ENCODE measurements at regions of chr22 and their contacts with region 1.

Region 1: GRCh38 chr22:24768537-24769374 is 5.8 kb downstream of the PIWIL3 start:
- DNase-seq: peak; percentile 32
- H3K4me3 ChIP-seq: no peak overlapping the region
- H3K27ac ChIP-seq: no peak overlapping the region
- H3K27me3 ChIP-seq: peaks cover 13% of the 10 kb centered on the region
- CTCF ChIP-seq: peak; percentile 68

Region 2: DNA sequence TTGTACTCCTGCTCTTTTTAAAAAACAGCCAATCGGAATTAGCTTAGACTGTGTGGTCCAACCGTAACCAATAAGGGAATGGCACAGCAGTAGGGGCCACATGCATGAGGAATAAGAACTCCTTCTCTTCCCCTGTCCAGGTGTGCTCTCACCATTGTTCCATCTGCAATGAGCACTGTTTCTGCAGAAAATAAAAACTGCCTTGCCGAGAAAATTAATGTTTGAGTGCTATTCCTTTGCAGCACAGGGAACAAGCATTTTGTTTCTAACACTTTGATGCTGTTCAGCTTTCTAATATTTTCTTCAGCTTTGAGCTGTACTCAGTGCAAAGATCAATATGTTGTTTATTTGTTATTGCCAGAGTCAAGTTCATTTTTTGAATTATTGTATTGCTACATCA is 52.2 kb before region 1 on chr22:
- CTCF ChIA-PET with region 1: no interaction called
- POLR2A ChIA-PET with region 1: no interaction called
- DNase-seq: no peak
- H3K4me3 ChIP-seq: no peak overlapping the region
- H3K27ac ChIP-seq: no peak overlapping the region
- H3K27me3 ChIP-seq: peaks cover 2% of the 10 kb centered on the region
- CTCF ChIP-seq: no peak

Region 3: DNA sequence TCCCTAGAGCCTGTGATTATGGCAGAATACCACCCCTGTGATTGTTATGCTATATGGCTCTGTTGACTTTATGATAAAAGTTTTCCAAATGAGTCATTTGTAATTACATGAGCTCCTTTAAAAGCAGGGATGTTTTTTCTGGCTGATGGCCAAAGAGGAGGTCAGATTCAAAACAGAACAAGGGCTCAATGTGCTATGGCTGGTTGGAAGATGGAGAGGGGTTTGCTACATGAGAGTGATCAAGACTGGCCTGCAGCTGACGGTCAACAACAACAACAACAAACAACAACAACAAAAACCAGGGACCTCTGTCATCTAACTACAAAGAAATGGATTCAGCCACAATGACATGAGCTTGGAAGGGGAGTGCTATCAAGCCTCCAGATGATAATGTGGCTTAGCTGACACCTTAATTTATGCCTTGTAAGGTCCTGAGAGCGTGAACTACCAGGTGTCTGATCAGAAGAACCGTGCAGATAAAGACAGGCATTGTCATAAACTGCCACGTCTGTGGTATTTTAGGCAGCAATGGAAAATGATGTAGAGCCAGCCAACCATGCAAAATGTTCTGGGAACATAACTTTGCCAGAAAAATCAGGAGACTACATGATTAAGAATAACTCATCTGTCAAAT is 41.4 kb before region 1 on chr22:
- CTCF ChIA-PET with region 1: no interaction called
- POLR2A ChIA-PET with region 1: no interaction called
- DNase-seq: peak; percentile 74
- H3K4me3 ChIP-seq: no peak overlapping the region
- H3K27ac ChIP-seq: no peak overlapping the region
- H3K27me3 ChIP-seq: no peaks in the 10 kb centered on the region
- CTCF ChIP-seq: no peak

Region 4: DNA sequence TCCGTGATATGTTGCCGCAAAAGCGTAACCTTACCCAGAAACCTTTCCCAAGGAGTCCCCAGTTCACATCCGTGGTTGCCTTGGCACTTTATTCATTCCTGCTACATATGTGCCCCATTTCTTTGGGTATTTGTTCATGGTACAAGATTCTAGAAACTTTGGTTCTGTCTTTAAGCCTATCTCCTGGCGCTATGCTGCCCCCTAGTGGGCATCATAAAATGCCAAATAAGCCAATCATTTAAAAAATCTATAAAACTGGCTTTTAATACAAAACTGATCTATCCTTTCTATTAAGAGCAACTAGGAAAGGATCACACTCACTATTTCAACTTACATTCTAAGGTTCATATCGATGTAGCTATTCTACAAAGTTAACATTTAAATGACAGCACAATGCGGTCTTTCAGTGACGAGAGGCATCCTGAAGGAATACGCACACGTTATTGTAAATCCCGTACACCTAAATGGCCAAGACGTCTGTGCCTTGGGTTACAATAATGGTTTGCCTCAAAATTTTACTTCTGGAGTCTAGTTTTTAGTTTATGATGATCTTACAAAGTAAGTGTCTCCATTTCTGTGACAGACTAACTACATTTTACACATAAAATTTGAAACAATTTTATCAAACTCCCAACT is 10.5 kb before region 1 on chr22:
- CTCF ChIA-PET with region 1: interaction called, 34 read pairs
- POLR2A ChIA-PET with region 1: no interaction called
- DNase-seq: peak; percentile 37
- H3K4me3 ChIP-seq: no peak overlapping the region
- H3K27ac ChIP-seq: no peak overlapping the region
- H3K27me3 ChIP-seq: peaks cover 8% of the 10 kb centered on the region
- CTCF ChIP-seq: peak; percentile 78

Region 5: DNA sequence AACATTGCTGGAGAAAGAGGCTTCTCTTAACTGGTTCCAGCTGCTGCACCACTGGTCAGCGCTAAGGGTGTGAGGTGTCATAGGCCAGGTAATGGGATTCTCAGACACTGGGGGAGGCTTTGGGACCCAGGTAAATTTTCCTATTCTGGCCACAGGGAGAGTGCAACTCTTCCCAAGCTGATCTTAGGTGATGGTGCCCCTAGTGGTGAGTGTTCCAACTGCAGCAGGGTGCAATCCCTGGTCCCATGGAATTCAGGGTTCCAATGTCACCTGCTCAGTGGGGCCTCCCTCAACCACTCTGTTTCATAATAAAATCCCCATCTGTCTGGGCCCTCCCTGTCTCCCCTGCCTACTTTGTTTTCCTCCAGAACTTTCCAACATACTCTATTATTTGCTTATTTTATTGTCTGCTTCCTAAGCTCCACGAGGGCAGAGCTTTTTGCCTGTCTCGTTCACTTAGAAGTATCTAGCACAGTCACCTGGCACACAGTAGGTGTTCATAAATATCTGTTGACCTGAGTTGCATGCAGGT is 34.3 kb after region 1 on chr22:
- CTCF ChIA-PET with region 1: interaction called, 15 read pairs
- POLR2A ChIA-PET with region 1: no interaction called
- DNase-seq: no peak
- H3K4me3 ChIP-seq: no peak overlapping the region
- H3K27ac ChIP-seq: no peak overlapping the region
- H3K27me3 ChIP-seq: peaks cover 8% of the 10 kb centered on the region
- CTCF ChIP-seq: peak; percentile 88

Region 6: DNA sequence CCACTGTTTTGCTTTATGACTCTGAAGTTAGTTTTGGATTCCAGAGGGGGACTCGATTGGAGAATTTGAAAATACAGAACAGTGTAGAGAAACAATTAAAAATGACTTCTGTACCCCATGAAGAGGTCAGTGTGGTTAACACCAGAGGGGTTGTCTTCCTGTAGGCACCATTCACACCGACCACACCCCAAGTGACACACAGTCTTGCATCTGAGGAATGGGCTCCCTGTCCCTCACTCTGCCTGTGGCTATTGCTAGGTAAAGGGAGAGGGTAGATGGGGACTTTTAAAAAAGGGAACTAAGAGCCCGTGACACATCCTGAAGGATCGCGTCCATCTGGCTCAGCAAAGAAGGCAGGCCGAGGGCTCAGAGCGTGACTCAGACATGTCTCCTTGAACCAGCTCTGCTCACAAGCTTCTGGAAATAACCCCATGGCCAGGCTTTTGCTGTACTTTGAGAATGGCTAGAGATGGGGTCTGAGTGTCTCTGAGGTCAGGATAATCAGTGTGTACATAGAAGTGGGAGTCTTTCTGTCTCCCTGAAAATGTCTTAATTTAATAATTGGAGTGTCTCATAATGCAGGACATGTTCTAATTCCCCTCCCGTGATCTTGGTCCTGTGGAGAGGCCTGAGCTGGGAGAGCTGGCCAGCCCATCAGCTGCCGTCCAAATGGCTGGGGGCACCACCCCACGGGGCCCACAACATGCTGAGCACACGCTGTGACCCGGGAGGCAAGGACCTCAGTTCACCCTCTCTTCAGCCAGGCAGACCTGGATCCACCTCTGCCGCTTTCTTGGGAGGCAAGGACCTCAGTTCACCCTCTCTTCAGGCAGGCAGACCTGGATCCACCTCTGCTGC is 76.5 kb after region 1 on chr22:
- CTCF ChIA-PET with region 1: interaction called, 14 read pairs
- POLR2A ChIA-PET with region 1: no interaction called
- DNase-seq: no peak
- H3K4me3 ChIP-seq: no peak overlapping the region
- H3K27ac ChIP-seq: no peak overlapping the region
- H3K27me3 ChIP-seq: no peaks in the 10 kb centered on the region
- CTCF ChIP-seq: no peak

Region 7: GRCh38 chr22:25048659-25049647 is 280.2 kb after region 1 on chr22:
- CTCF ChIA-PET with region 1: interaction called, 63 read pairs
- POLR2A ChIA-PET with region 1: no interaction called
- DNase-seq: no peak
- H3K4me3 ChIP-seq: no peak overlapping the region
- H3K27ac ChIP-seq: no peak overlapping the region
- H3K27me3 ChIP-seq: no peaks in the 10 kb centered on the region
- CTCF ChIP-seq: peak; percentile 79